Activated CD4-positive, alpha-beta T cell treated with anti-CD3 and anti-CD28 coated beads for 36 hours (primary cell): ENCODE measurements at regions of chr1 and their contacts with region 1.

Region 1: DNA sequence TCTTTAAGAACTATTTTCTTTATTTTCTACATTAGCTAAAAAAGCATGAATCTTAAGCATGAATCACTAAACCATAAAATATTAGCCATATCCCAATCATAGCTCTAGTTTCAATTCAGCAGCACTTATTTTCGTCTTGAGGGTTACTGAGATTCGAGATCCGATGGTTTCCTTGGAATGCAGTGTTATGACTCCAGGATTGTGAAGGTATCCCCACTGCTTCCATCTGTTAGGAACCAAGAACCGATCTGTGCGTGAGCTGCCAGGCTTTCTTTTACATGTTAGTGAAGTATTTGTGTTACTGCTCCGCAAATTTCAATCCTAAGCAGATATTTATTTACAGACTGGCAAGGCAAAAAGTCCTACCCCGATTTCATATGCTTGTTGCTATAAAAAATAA is 18.8 kb downstream of the TNFRSF9 start:
- DNase-seq: no peak
- ATAC-seq: no peak
- H3K4me3 Mint-ChIP-seq: no peak overlapping the region
- H3K27ac Mint-ChIP-seq: no peak overlapping the region
- H3K4me1 Mint-ChIP-seq: peaks cover 25% of the 10 kb centered on the region
- H3K27me3 Mint-ChIP-seq: no peaks in the 10 kb centered on the region

Region 2: DNA sequence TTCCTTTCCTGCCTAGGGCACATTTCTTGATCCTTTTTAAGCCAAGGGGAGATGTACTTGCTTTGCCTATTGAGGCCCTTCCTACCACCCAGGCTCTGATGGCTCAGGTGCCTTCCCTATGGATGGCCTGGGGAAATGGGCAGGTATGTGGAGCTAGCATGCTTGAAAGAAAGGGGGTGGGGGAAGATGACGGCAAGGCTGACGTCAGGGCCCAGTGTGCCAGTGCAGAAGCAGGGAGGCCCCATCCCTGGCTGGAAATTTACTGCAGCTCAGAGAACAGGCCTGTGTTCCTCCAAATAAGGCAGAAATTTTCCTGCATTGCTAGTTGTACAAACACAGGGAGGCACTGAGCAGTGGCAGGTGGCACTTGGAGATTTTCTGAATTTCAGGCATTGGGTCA is 603.9 kb before region 1 on chr1:
- CTCF ChIA-PET with region 1: no interaction called
- POLR2A ChIA-PET with region 1: no interaction called
- intact Hi-C with region 1: no loop called
- DNase-seq: no peak
- ATAC-seq: no peak
- H3K4me3 Mint-ChIP-seq: no peak overlapping the region
- H3K27ac Mint-ChIP-seq: no peak overlapping the region
- H3K4me1 Mint-ChIP-seq: no peaks in the 10 kb centered on the region
- H3K27me3 Mint-ChIP-seq: peaks cover 17% of the 10 kb centered on the region

Region 3: DNA sequence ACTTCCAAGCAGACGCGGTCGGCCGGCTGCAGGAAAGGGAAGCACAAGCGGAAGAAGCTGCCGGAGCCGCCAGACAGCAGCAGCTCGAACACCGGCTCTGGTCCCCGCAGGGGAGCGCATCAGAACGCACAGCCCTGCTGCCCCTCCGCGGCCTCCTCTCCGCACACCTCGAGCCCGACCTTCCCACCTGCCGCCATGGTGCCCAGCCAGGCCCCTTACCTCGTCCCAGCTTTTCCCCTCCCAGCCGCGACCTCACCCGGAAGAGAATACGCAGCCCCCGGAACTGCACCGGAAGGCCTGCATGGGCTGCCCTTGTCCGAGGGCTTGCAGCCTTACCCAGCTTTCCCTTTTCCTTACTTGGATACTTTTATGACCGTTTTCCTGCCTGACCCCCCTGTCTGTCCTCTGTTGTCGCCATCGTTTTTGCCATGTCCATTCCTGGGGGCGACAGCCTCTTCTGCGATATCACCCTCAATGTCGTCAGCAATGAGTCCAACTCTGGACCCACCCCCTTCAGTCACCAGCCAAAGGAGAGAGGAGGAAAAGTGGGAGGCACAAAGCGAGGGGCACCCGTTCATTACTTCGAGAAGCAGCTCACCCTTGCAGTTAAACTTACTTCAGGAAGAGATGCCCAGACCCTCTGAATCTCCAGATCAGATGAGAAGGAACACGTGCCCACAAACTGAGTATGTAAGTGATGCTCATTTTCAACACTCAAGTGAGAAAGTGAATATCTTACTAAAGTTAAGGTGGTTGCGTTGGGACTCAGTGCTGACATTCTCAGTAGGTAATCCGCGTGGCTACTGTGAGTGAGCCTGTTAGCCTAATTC is 94.5 kb before region 1 on chr1:
- CTCF ChIA-PET with region 1: no interaction called
- POLR2A ChIA-PET with region 1: no interaction called
- intact Hi-C with region 1: no loop called
- DNase-seq: peak; percentile 35
- ATAC-seq: peak; percentile 36
- H3K4me3 Mint-ChIP-seq: peak overlapping the region; percentile 75
- H3K27ac Mint-ChIP-seq: peak overlapping the region; percentile 86
- H3K4me1 Mint-ChIP-seq: peaks cover 2% of the 10 kb centered on the region
- H3K27me3 Mint-ChIP-seq: no peaks in the 10 kb centered on the region

Region 4: GRCh38 chr1:7942214-7942921 is 20.6 kb after region 1 on chr1:
- CTCF ChIA-PET with region 1: interaction called, 9 read pairs
- POLR2A ChIA-PET with region 1: interaction called, 4 read pairs
- intact Hi-C with region 1: loop called in 1 of 2 experiments (anchors 1 kb)
- DNase-seq: peak; percentile 57
- ATAC-seq: peak; percentile 25
- H3K4me3 Mint-ChIP-seq: peak overlapping the region; percentile 66
- H3K27ac Mint-ChIP-seq: peak overlapping the region; percentile 73
- H3K4me1 Mint-ChIP-seq: peaks cover 47% of the 10 kb centered on the region
- H3K27me3 Mint-ChIP-seq: peaks cover 28% of the 10 kb centered on the region